Common myeloid progenitor, CD34-positive (primary cell): ENCODE measurements at regions of chr14 and their contacts with region 1.

Region 1: GRCh38 chr14:74246542-74246941 is 7.3 kb downstream of the VSX2 start:
- DNase-seq: no peak
- H3K4me3 ChIP-seq: no peak overlapping the region
- H3K27ac ChIP-seq: no peak overlapping the region
- H3K4me1 ChIP-seq: peaks cover 0 to 6% (median 2%) of the 10 kb centered on the region in 4 experiments
- H3K27me3 ChIP-seq: peaks cover 0 to 60% (median 29%) of the 10 kb centered on the region in 5 experiments

Region 2: GRCh38 chr14:73968885-73969284 is 277.7 kb before region 1 on chr14:
- CTCF ChIA-PET with region 1: no interaction called
- POLR2A ChIA-PET with region 1: no interaction called
- DNase-seq: no peak
- H3K4me3 ChIP-seq: no peak overlapping the region
- H3K27ac ChIP-seq: no peak overlapping the region
- H3K4me1 ChIP-seq: no peaks in the 10 kb centered on the region
- H3K27me3 ChIP-seq: no peaks in the 10 kb centered on the region

Region 3: GRCh38 chr14:74109369-74109768 is 137.2 kb before region 1 on chr14:
- CTCF ChIA-PET with region 1: interaction called, 11 read pairs
- POLR2A ChIA-PET with region 1: no interaction called
- DNase-seq: no peak
- H3K4me3 ChIP-seq: no peak overlapping the region
- H3K27ac ChIP-seq: no peak overlapping the region
- H3K4me1 ChIP-seq: no peaks in the 10 kb centered on the region
- H3K27me3 ChIP-seq: no peaks in the 10 kb centered on the region

Region 4: DNA sequence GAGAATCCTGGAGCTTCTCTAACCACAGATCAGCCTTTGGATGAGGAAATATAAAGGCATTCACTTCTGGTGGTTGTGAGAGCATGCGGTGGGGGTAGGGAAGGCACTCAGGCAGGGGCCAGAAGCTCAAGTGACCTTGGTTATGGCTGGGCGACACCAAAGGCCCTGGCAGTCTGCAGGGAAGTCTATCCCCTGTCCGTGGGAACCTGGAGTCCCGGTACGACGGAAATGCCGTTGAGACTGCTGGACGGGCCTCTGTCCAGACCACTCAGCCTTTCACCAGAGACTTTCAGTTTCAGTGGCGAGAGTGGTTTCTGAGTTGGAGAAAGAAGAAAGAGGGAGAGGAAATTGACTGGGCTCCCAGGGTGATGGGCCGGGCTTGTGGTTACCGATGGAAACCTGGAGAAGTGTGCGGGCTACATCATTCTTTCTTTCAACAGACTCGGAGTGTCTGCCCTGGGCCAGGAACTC is 268.0 kb after region 1 on chr14:
- CTCF ChIA-PET with region 1: no interaction called
- POLR2A ChIA-PET with region 1: no interaction called
- DNase-seq: peak in 2 of 3 donors; percentile 49 to 57
- H3K4me3 ChIP-seq: peak overlapping the region in 5 of 7 experiments; percentile 10 to 62 (median 42)
- H3K27ac ChIP-seq: peak overlapping the region in 1 of 2 experiments; percentile 60
- H3K4me1 ChIP-seq: peaks cover 0 to 49% (median 37%) of the 10 kb centered on the region in 4 experiments
- H3K27me3 ChIP-seq: no peaks in the 10 kb centered on the region